Endothelial cell of umbilical vein (primary cell): ENCODE measurements at regions of chr4 and their contacts with region 1.

Region 1: DNA sequence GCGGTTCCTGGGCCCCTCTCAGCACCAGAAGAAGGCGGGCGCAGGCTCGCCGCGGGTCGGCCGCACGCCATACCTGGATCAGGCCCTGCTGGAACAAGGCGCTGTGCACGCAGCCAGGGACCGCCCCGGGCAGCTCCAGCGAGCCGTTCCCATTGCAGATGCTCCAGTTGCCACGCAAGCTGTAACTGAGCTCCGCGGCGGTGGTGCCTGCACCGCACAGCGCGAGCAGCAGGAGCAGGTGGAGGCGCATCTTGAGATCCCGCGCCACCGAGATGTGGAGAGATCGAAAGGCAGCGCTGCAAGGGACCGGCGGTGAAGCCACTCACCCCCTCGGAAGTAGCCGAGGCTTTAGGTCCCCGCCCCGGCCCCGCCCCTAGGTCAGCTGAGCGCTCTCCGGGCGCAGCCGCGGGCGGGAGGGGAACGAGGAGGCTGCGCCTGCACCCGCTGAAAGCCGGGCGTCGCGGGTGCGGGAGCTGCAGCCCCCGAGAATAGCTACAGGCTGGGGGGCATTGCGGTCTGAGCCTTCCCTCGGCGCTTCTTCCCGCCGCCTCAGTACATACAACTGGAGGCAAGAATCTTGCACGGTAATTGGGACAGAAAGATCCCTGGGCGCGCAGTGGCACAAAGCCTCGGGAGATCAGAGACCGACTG is at the start of gene MANBA:
- DNase-seq: peak; percentile 70
- H3K4me3 ChIP-seq: peak within 1 kb of the TSS; percentile 56 to 65 (median 59)
- H3K27ac ChIP-seq: no peak within 1 kb of the TSS
- H3K4me1 ChIP-seq: peaks cover 17% of the 10 kb centered on the region
- H3K27me3 ChIP-seq: peaks cover 0 to 2% of the 10 kb centered on the region in 2 experiments
- CTCF ChIP-seq: no peak
- POLR2A ChIP-seq: peak; percentile 51
- total RNA-seq, gene MANBA: 7.7 and 8.3 TPM in 2 replicates

Region 2: GRCh38 chr4:102439236-102439614 is 321.5 kb before region 1 on chr4:
- CTCF ChIA-PET with region 1: no interaction called
- POLR2A ChIA-PET with region 1: no interaction called
- dilution Hi-C with region 1: no loop called
- intact Hi-C with region 1: loop called (anchors 10 kb)
- DNase-seq: peak; percentile 77
- H3K4me3 ChIP-seq: no peak overlapping the region
- H3K27ac ChIP-seq: no peak overlapping the region
- H3K4me1 ChIP-seq: no peaks in the 10 kb centered on the region
- H3K27me3 ChIP-seq: no peaks in the 10 kb centered on the region
- CTCF ChIP-seq: no peak
- POLR2A ChIP-seq: no peak

Region 3: DNA sequence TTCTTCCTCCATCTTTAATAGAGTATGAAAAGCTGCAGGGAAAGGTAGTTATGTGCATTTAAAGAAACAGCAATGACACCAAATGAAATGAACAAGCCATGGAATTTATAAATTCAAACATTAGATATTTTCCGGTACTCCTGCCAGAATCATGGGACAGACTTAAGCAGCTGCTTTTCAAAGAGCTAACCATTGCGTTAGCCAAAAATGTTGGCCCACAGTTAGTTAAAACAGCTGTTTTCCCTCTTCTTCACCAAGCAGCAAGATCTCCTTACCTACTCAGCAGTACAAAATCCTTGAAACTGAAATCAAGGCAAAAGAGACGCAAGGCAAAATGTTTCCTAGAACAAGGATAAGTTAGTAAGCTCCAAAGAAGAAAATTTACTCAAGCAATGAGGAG is 64.0 kb before region 1 on chr4:
- CTCF ChIA-PET with region 1: no interaction called
- POLR2A ChIA-PET with region 1: no interaction called
- dilution Hi-C with region 1: no loop called
- intact Hi-C with region 1: no loop called
- DNase-seq: no peak
- H3K4me3 ChIP-seq: no peak overlapping the region
- H3K27ac ChIP-seq: no peak overlapping the region
- H3K4me1 ChIP-seq: no peaks in the 10 kb centered on the region
- H3K27me3 ChIP-seq: no peaks in the 10 kb centered on the region
- CTCF ChIP-seq: no peak
- POLR2A ChIP-seq: no peak